ENCODE measurements at regions of chr19 and their contacts with region 1.

Region 1: DNA sequence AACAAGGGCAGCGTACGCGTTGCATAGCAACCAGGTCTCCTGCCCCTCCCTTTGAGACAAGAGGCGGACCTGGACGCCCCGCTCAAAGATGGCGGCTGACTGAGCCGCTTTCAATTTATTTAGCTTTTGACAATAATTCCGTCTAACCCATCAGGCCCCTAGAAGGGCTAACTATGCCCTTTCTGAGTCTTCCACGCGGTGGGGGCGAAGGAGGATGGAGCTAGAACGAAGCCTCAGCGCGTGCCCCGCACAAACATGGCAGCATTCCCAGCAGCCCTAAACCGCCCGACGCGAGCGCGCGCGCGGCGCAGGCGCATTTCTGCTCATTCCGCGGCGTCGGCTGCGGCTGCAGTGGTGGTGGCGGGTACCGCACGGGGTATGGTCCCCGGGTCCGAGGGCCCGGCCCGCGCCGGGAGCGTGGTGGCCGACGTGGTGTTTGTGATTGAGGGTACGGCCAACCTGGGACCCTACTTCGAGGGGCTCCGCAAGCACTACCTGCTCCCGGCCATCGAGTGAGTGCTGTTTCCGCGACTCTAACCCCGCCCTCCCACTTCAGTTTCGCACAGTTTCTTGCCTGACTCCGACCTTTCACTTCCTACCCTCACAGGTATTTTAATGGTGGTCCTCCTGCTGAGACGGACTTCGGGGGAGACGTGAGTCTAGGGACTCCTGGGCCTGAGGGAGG is at the start of gene MED25:
- DNase-seq: peak; percentile 78
- H3K4me3 ChIP-seq: peak within 1 kb of the TSS; percentile 68 to 94 (median 93)
- H3K27ac ChIP-seq: peak within 1 kb of the TSS; percentile 99
- H3K4me1 ChIP-seq: peaks cover 6% of the 10 kb centered on the region
- H3K27me3 ChIP-seq: no peaks in the 10 kb centered on the region
- CTCF ChIP-seq: peak in 1 of 2 donors; percentile 26
- total RNA-seq, gene MED25: 18.3 to 51.8 TPM

Region 2: DNA sequence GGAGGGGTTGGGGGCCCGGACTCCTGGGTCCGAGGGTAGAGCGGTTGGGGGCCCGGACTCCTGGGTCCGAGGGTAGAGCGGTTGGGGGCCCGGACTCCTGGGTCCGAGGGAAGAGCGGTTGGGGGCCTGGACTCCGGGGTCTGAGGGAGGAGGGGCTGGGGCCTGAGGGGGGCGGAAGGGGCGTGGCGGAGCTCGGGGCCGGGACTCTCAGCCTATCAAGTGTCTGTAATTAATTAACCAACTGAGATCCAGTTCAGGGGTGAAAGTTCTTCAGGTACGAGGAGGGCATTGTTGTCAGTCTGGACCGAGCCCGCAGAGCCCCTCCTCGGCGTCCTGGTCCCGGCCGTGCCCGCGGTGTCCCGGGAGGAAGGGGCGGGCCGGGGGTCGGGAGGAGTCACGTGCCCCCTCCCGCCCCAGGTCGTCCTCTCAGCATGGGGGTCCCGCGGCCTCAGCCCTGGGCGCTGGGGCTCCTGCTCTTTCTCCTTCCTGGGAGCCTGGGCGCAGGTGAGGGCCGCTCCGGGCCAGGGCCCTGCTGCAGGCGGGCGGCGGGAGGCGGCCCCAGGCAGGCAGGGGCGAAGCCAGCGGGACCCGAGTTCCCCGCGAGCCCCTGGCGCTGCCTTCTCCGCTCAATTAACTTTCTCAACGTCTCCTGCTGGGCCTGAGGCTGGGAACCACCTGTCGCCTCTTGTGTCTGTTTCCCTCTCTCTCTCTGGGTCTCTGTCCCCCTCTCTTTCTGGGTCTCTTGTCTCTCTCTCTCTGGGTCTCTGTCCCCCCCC is 304.9 kb before region 1 on chr19:
- CTCF ChIA-PET with region 1: no interaction called
- dilution Hi-C with region 1: loop called (anchors 5 kb)
- in situ Hi-C with region 1: no loop called
- intact Hi-C with region 1: no loop called
- DNase-seq: no peak
- H3K4me3 ChIP-seq: peak overlapping the region in 2 of 3 experiments; percentile 32 to 36
- H3K27ac ChIP-seq: no peak overlapping the region
- H3K4me1 ChIP-seq: peaks cover 7% of the 10 kb centered on the region
- H3K27me3 ChIP-seq: peaks cover 4% of the 10 kb centered on the region
- CTCF ChIP-seq: no peak

Region 3: GRCh38 chr19:49741210-49741844 is 76.8 kb before region 1 on chr19:
- CTCF ChIA-PET with region 1: no interaction called
- dilution Hi-C with region 1: loop called (anchors 5 kb)
- in situ Hi-C with region 1: no loop called
- intact Hi-C with region 1: no loop called
- DNase-seq: no peak
- H3K4me3 ChIP-seq: no peak overlapping the region
- H3K27ac ChIP-seq: no peak overlapping the region
- H3K4me1 ChIP-seq: no peaks in the 10 kb centered on the region
- H3K27me3 ChIP-seq: no peaks in the 10 kb centered on the region
- CTCF ChIP-seq: no peak

Region 4: DNA sequence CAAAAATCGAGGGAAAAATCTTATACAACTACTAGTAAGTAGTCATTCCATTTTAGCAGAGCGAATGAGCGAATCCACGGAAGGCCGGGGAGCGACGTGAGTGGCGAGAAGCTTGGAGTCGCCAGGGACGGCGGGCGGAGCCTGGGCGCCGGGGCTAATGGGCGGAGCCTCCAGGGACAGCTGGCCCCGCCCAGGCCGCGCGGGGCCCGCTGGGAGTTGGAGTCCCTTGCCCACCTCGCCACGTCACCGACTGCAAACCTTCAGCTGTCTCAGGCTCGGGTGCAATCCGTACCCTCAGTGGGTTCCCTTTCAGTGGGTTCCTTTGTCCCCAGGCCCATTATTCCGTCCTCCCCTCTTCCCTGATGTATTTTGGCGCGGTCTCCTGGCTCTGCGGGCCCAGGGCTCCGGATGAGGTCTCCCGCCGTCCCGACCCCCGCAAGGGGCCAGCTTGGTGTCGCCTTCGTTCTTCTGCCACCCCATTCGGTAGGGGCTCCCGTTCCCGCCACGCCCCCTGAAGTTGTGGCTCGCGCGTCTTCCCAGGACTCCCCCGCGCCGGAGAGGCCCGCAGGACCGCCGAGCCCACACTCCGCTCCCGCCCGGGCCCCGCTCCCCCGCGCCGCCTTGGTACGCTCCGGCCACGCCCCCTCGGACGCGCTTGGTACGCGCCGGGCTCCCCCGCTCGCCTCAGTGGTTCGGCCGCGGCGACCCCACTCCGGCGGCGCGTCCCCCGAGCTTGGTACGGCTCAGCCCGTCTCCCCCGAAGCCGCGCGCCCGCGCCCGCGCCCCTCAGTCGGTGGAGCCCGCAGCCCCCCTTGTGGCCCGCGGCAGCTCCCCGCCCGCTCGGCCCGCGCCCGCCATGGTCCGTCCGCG is 32.6 kb after region 1 on chr19 and contains the start of gene PTOV1:
- CTCF ChIA-PET with region 1: no interaction called
- dilution Hi-C with region 1: no loop called
- in situ Hi-C with region 1: no loop called
- intact Hi-C with region 1: loop called (anchors 1 kb)
- DNase-seq: peak; percentile 81
- H3K4me3 ChIP-seq: peak within 1 kb of the TSS; percentile 76 to 95 (median 95)
- H3K27ac ChIP-seq: peak within 1 kb of the TSS; percentile 79
- H3K4me1 ChIP-seq: peaks cover 42% of the 10 kb centered on the region
- H3K27me3 ChIP-seq: no peaks in the 10 kb centered on the region
- CTCF ChIP-seq: no peak
- total RNA-seq, gene PTOV1: 28.8 to 85.6 TPM

Region 5: DNA sequence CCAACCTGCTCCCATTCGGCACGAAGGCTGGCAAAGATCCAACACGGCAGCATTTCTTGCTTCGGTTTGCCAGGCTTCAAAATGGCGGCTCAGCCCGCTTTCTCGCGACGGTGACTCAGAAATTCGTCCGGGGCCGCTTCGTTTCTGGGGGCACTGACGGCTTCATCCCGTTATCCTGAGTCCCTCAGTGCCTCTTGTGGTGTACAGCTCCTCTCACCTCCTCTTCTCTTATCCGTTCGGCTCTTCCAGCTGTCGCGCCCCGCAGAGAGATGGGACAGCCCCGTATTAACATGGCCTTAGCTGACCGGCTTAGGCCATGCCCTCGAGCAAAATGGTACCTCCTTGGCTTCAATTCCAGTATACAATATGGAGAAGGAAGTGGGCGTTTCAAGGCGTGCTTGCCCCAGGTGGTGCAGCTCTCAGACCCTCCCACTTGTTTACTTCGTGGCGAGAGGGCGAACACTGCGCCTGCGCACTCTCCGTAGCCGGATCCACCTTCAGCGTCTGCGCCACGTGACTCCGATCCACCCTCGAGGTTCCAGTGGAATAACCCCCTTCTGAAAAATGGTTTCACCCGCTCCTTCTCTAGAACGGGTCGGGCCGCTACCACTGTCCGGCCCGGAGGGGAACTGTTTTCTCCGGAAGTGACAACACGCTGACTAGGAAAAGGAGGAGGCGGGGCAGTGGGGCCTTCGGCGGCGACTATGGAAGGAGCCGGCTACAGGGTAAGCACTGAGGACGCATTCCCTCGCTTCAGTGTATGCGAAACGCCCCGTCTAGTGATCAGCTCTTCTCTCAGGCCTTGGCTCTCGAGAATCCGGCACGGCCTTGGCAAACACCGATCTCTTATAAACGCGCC is 59.1 kb after region 1 on chr19 and contains the starts of genes AKT1S1 and TBC1D17:
- CTCF ChIA-PET with region 1: no interaction called
- dilution Hi-C with region 1: loop called (anchors 5 kb)
- in situ Hi-C with region 1: no loop called
- intact Hi-C with region 1: loop called (anchors 1 kb)
- DNase-seq: peak; percentile 100
- H3K4me3 ChIP-seq: peak within 1 kb of the TSS; percentile 86 to 98 (median 92)
- H3K27ac ChIP-seq: peak within 1 kb of the TSS; percentile 98
- H3K4me1 ChIP-seq: peaks cover 24% of the 10 kb centered on the region
- H3K27me3 ChIP-seq: no peaks in the 10 kb centered on the region
- CTCF ChIP-seq: no peak
- total RNA-seq, gene AKT1S1: 12.3 to 68.3 TPM
- total RNA-seq, gene TBC1D17: 13.0 to 32.0 TPM

Region 6: DNA sequence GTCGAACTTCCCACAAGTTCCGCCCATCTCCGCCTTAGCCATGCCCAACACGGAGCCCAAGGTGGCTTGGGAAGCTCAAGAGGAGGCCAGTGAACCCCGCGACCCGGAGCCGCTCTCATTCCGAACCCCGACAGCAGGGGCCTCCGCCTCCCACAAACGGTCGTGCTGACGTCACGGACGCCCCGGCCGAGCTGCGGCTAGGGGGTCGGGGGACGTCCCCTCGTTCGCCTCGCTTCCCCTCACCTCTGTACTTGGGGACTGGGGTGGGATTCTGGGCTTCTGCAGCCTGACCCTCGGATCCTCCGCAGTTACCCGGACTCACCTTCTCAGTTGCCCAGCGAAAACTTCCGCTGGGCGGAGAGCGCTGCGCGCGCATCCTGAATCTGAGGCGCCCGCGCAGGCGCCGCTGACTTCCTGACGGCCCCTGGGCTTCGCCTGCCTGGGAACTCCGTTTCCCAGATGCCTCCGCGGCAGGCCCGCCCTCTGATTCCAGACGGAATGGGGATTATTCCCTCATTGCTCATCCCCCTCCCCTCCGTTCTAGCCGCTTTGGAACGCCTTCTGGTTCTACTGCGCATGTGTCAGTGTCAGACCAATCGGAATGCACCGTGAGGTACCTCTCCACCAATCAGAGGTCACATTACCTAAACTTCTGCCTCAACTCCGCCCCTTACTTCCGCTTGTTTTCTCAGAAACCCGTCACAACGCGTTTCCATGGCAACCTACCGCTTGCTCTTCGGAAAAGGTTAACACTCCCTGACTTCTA is 207.1 kb after region 1 on chr19 and contains the start of gene VRK3:
- CTCF ChIA-PET with region 1: no interaction called
- dilution Hi-C with region 1: no loop called
- in situ Hi-C with region 1: no loop called
- intact Hi-C with region 1: loop called (anchors 5 kb)
- DNase-seq: peak; percentile 100
- H3K4me3 ChIP-seq: peak within 1 kb of the TSS; percentile 89 to 99 (median 98)
- H3K27ac ChIP-seq: peak within 1 kb of the TSS; percentile 98
- H3K4me1 ChIP-seq: peaks cover 5% of the 10 kb centered on the region
- H3K27me3 ChIP-seq: no peaks in the 10 kb centered on the region
- CTCF ChIP-seq: peak; percentile 7 to 36
- total RNA-seq, gene VRK3: 20.7 to 32.8 TPM

Region 7: GRCh38 chr19:50050384-50051224 is 232.5 kb after region 1 on chr19:
- CTCF ChIA-PET with region 1: no interaction called
- dilution Hi-C with region 1: no loop called
- in situ Hi-C with region 1: no loop called
- intact Hi-C with region 1: no loop called
- DNase-seq: peak; percentile 77
- H3K4me3 ChIP-seq: peak overlapping the region; percentile 24 to 55 (median 40)
- H3K27ac ChIP-seq: peak overlapping the region; percentile 39
- H3K4me1 ChIP-seq: peaks cover 4% of the 10 kb centered on the region
- H3K27me3 ChIP-seq: no peaks in the 10 kb centered on the region
- CTCF ChIP-seq: no peak

Measured in mammary epithelial cell (primary cell).